Ovary (tissue), 10 donors: ENCODE measurements at regions of chr7 and their contacts with region 1.

Region 1: GRCh38 chr7:22854158-22855048 is 31.8 kb upstream of the TOMM7 start:
- DNase-seq: peak; percentile 89 to 93 (median 91)
- H3K4me3 ChIP-seq: peak overlapping the region; percentile 61
- H3K27ac ChIP-seq: peak overlapping the region; percentile 78 to 88
- H3K4me1 ChIP-seq: peaks cover 6% of the 10 kb centered on the region
- H3K27me3 ChIP-seq: no peaks in the 10 kb centered on the region
- CTCF ChIP-seq: peak in 2 of 3 donors; percentile 45 to 82
- EP300 ChIP-seq: no peak
- POLR2A ChIP-seq: peak; percentile 54

Region 2: GRCh38 chr7:22791204-22792158 is 62.9 kb before region 1 on chr7:
- intact Hi-C with region 1: no loop called
- DNase-seq: no peak
- H3K4me3 ChIP-seq: no peak overlapping the region
- H3K27ac ChIP-seq: no peak overlapping the region
- H3K4me1 ChIP-seq: no peaks in the 10 kb centered on the region
- H3K27me3 ChIP-seq: no peaks in the 10 kb centered on the region
- CTCF ChIP-seq: no peak
- EP300 ChIP-seq: no peak
- POLR2A ChIP-seq: no peak

Region 3: GRCh38 chr7:22822486-22823141 is 31.8 kb before region 1 on chr7 and contains the start of gene TOMM7:
- intact Hi-C with region 1: loop called in 1 of 4 experiments (anchors 2 kb)
- DNase-seq: peak; percentile 87 to 93 (median 91)
- H3K4me3 ChIP-seq: peak within 1 kb of the TSS; percentile 94
- H3K27ac ChIP-seq: peak within 1 kb of the TSS in 1 of 2 donors; percentile 70
- H3K4me1 ChIP-seq: peaks cover 3% of the 10 kb centered on the region
- H3K27me3 ChIP-seq: no peaks in the 10 kb centered on the region
- CTCF ChIP-seq: peak in 2 of 3 donors; percentile 54 to 68
- EP300 ChIP-seq: no peak
- POLR2A ChIP-seq: peak; percentile 75
- total RNA-seq, gene TOMM7: 325 to 869 (median 586) TPM

Region 4: DNA sequence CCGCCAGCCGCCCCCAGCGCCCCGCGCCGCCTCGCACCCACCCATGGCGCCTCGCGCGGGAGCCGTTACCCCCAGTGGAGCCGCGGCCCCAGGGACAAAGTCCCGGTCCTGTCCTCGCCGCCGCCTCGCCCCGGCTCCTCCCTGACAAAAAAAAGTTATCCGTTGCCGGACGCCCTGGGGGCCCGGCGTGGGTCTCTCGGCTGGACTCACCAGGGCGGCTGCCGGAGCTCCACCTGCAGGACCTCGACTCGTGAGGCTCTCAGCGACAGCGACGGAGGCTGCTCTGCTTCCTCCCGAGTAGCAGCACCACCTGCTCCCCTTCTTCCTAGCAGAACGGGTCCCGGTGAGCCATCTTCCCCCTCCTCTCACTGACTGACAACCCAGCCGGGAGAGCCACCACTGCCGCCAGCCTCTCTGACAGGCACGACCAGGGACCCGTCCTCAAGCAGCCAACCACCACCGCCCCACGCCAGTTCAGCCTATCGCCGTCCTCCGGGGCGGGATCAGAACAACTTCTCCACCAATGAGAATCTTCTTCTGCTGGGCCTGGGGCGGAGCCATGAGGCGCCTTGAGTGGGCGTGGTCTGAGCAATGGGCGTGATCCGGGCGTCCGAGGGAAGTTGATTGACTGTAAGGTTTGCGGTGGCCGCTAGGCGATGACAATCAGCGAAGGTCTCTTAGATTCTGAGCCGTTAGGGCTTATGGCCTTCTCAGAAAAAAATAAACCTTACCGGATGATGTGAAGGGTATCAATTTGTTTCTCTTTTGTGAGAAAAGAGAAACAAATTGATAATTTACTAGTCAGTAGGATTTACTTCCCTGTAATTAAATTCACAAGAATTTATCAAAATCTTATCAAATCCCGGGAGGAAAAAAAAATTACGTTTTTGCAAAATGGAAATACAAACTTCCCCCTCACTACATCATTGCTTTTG is 159.6 kb after region 1 on chr7 and contains the start of gene HYCC1:
- intact Hi-C with region 1: loop called in 2 of 4 experiments (anchors 10 kb)
- DNase-seq: peak; percentile 97 to 99 (median 98)
- H3K4me3 ChIP-seq: peak within 1 kb of the TSS; percentile 62
- H3K27ac ChIP-seq: peak within 1 kb of the TSS; percentile 5 to 35
- H3K4me1 ChIP-seq: peaks cover 1% of the 10 kb centered on the region
- H3K27me3 ChIP-seq: no peaks in the 10 kb centered on the region
- CTCF ChIP-seq: peak; percentile 34 to 66 (median 53)
- EP300 ChIP-seq: no peak
- POLR2A ChIP-seq: peak; percentile 78
- total RNA-seq, gene HYCC1: 19.5 to 27.4 (median 25.2) TPM